ENCODE measurements at regions of chr16 and their contacts with region 1.

Region 1: DNA sequence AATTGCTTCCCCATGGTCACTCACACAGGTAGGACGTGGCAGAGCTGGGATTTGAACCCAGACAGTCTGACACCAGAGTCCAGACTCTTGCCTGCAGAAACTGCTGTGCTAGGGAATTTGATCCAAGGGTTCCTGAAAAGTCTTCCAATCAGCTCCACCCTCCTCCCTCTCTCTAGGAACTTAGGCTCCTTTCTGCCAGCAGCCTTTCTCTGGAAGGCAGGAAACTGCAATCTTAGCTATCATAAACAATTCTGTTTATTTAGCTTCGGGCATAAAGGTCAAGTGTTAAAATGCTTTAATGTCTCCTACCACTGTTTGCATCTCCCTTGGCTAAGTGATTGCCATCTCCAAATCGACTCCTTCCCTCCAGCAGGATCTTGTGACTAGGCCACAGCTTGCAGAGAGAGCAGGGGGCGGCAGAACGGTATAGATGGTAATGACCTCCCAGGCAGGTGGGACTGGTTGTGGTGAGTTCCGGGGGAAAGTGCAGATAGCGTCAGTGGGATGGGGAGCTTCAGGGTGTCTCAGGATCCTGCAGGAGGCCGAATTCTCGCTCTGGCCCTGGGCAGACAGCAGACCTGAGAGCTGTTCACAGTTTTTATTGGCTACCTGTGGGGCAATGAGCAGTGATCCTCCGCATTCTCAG is 882.4 kb upstream of the EEF2KMT start:
- DNase-seq: no peak

Region 2: DNA sequence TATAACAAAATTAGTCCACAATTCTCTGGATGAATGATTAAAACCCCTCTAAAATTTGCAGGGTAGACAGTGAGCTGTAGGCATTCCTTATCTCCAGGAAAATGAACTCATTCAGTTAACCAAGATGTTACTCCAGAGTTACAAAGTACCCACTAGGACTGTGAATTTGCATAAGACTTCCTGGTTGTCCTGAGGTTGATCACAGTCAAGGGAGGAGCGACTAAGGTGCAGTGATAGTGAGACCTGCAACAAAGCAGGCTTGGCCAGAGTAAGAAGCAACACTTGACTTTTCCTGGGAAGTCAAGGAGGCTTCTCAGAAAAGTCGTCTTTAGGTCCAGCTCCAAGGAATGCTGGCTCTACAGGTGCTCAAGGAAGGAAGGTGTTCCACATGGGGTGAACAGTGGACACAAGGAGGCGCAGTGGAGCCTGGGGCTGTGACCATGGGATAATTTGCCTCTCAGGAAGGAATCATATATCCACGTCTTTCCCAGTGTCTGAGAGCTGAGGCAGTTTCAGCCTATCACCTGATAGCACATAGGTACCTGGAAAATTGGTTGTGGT is 61.4 kb before region 1 on chr16:
- intact Hi-C with region 1: loop called in 1 of 2 experiments (anchors 10 kb)
- DNase-seq: no peak

Region 3: GRCh38 chr16:6038941-6039645 is 59.1 kb after region 1 on chr16:
- intact Hi-C with region 1: loop called in 1 of 2 experiments (anchors 2 kb)
- DNase-seq: no peak